PC-9 (cell line): ENCODE measurements at regions of chr17 and their contacts with region 1.

Region 1: GRCh38 chr17:74892974-74893911 is at the start of gene FADS6:
- DNase-seq: no peak
- H3K4me3 ChIP-seq: no peak within 1 kb of the TSS
- H3K27ac ChIP-seq: no peak within 1 kb of the TSS
- H3K4me1 ChIP-seq: no peaks in the 10 kb centered on the region
- H3K27me3 ChIP-seq: peaks cover 45% of the 10 kb centered on the region
- CTCF ChIP-seq: no peak
- total RNA-seq, gene FADS6: not detected in 2 replicates

Region 2: DNA sequence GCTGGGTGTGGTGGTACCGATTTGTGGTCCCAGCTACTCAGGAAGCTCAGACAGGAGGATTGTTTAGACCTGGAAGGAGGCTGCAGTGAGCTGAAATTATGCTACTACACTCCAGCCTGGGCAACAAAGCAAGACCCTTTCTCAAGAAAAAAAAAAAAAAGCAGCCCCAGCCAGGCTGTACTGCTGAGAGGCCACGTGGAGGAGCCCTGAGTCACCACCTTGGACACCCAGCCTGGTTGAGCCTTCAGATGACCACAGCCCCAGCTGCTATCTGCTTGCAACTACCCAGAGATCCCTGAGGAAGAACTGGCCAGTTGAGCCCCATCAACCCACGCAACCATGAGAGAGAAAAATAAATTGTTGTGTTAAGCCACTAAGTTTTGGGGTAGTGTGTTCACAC is 485.0 kb before region 1 on chr17:
- CTCF ChIA-PET with region 1: interaction called, 19 read pairs
- POLR2A ChIA-PET with region 1: no interaction called
- intact Hi-C with region 1: no loop called
- DNase-seq: peak; percentile 25 to 36
- H3K4me3 ChIP-seq: no peak overlapping the region
- H3K27ac ChIP-seq: no peak overlapping the region
- H3K4me1 ChIP-seq: no peaks in the 10 kb centered on the region
- H3K27me3 ChIP-seq: no peaks in the 10 kb centered on the region
- CTCF ChIP-seq: 0 out of 2 replicates have a peak, but pooled peaks have one; percentile 32

Region 3: GRCh38 chr17:74527081-74527480 is 366.2 kb before region 1 on chr17:
- CTCF ChIA-PET with region 1: no interaction called
- POLR2A ChIA-PET with region 1: interaction called, 14 read pairs
- intact Hi-C with region 1: no loop called
- DNase-seq: no peak
- H3K4me3 ChIP-seq: no peak overlapping the region
- H3K27ac ChIP-seq: no peak overlapping the region
- H3K4me1 ChIP-seq: no peaks in the 10 kb centered on the region
- H3K27me3 ChIP-seq: peaks cover 98% of the 10 kb centered on the region
- CTCF ChIP-seq: no peak